ENCODE measurements at regions of chr1 and their contacts with region 1.

Region 1: GRCh38 chr1:161192476-161193465 is 6.1 kb downstream of the ADAMTS4 start:
- DNase-seq: peak; percentile 81
- H3K4me3 Mint-ChIP-seq: no peak overlapping the region
- H3K27ac Mint-ChIP-seq: peak overlapping the region; percentile 42
- H3K4me1 Mint-ChIP-seq: peaks cover 29% of the 10 kb centered on the region
- H3K27me3 Mint-ChIP-seq: no peaks in the 10 kb centered on the region

Region 2: DNA sequence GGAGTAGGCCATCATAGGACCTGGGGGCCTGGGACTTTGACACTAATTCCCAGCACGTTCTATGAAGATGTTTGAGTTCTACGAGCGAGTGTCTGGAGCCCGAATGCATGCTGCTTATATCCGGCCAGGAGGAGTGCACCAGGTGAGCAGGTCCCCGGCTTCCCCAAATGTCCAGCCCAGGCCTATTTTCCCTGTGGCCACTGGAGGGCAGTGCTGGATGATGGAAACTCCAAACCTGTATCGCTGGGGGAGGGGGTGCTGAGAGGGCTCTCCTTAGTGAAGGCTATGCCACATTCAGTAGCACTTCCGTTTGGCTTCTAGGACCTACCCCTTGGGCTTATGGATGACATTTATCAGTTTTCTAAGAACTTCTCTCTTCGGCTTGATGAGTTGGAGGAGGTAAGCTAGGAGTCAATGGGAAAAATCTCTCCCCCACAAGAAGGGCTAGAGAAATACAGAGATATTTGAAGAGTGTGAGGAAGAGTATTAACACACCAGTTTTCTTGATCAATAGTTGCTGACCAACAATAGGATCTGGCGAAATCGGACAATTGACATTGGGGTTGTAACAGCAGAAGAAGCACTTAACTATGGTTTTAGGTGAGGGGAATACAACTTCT is 17.1 kb after region 1 on chr1:
- CTCF ChIA-PET with region 1: interaction called, 68 read pairs
- POLR2A ChIA-PET with region 1: no interaction called
- intact Hi-C with region 1: no loop called
- DNase-seq: peak; percentile 83
- H3K4me3 Mint-ChIP-seq: no peak overlapping the region
- H3K27ac Mint-ChIP-seq: peak overlapping the region; percentile 5
- H3K4me1 Mint-ChIP-seq: peaks cover 21% of the 10 kb centered on the region
- H3K27me3 Mint-ChIP-seq: no peaks in the 10 kb centered on the region